ENCODE measurements at regions of chr6 and their contacts with region 1.

Region 1: GRCh38 chr6:29847871-29848630 is 20.4 kb downstream of the HLA-G start:
- DNase-seq: peak; percentile 58 to 85 (median 80)
- H3K4me3 ChIP-seq: no peak overlapping the region
- H3K27ac ChIP-seq: no peak overlapping the region
- H3K4me1 ChIP-seq: no peaks in the 10 kb centered on the region
- H3K27me3 ChIP-seq: no peaks in the 10 kb centered on the region
- CTCF ChIP-seq: peak; percentile 70 to 92 (median 85)
- EP300 ChIP-seq: no peak
- POLR2A ChIP-seq: no peak

Region 2: DNA sequence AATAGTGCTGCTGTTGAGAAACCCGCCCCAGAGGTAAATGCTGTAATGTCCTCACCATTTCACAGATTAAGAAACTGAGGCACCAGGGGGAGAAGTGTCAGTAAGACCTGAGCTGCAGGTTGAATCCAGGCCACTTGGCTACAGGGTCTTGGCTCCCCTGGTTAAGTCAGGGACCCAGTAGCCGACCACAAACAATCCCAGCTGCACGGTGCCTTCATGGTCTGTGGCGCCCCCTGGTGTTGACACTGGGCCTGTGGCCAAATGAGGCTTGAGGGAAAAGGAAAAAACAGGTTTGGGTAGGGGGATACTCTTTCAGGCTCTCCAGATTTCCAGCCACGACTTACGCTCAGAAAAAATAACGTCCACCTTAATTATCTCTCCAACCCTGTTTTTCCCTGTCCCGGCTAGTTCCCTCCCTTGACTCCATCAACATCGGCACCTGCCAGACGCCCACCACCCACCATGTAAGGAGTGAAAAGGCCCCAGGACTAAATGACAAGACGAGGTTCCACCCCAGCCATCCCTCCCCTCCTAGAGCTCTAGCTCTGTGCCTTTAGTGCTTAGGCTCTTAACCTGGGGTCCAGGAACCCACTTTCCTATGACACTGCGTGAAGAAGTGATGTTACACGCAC is 165.4 kb after region 1 on chr6:
- intact Hi-C with region 1: loop called (anchors 2 to 10 kb)
- DNase-seq: peak in 1 of 5 donors; percentile 68
- H3K4me3 ChIP-seq: no peak overlapping the region
- H3K27ac ChIP-seq: no peak overlapping the region
- H3K4me1 ChIP-seq: no peaks in the 10 kb centered on the region
- H3K27me3 ChIP-seq: no peaks in the 10 kb centered on the region
- CTCF ChIP-seq: peak in 1 of 3 donors; percentile 45
- EP300 ChIP-seq: no peak
- POLR2A ChIP-seq: no peak

Region 3: GRCh38 chr6:30019819-30020218 is 171.8 kb after region 1 on chr6:
- intact Hi-C with region 1: loop called in 2 of 4 experiments (anchors 5 to 10 kb)
- DNase-seq: no peak
- H3K4me3 ChIP-seq: no peak overlapping the region
- H3K27ac ChIP-seq: no peak overlapping the region
- H3K4me1 ChIP-seq: no peaks in the 10 kb centered on the region
- H3K27me3 ChIP-seq: no peaks in the 10 kb centered on the region
- CTCF ChIP-seq: no peak
- EP300 ChIP-seq: no peak
- POLR2A ChIP-seq: no peak

Region 4: GRCh38 chr6:30031381-30031780 is 183.3 kb after region 1 on chr6:
- intact Hi-C with region 1: no loop called
- DNase-seq: no peak
- H3K4me3 ChIP-seq: no peak overlapping the region
- H3K27ac ChIP-seq: no peak overlapping the region
- H3K4me1 ChIP-seq: no peaks in the 10 kb centered on the region
- H3K27me3 ChIP-seq: no peaks in the 10 kb centered on the region
- CTCF ChIP-seq: no peak
- EP300 ChIP-seq: no peak
- POLR2A ChIP-seq: no peak